Activated T-helper 1 cell treated with anti-CD3 and anti-CD28 coated beads, Interleukin-12 subunit alpha, Interleukin-12 subunit beta, Interleukin-2, Interleukin-4 antibody, amounts not matched to agents 30 ng/mL and 10 ng/mL and 1 ng/mL, durations not matched to agents 14 hours and 24 hours and 36 hours (primary cell): ENCODE measurements at regions of chr19 and their contacts with region 1.

Region 1: DNA sequence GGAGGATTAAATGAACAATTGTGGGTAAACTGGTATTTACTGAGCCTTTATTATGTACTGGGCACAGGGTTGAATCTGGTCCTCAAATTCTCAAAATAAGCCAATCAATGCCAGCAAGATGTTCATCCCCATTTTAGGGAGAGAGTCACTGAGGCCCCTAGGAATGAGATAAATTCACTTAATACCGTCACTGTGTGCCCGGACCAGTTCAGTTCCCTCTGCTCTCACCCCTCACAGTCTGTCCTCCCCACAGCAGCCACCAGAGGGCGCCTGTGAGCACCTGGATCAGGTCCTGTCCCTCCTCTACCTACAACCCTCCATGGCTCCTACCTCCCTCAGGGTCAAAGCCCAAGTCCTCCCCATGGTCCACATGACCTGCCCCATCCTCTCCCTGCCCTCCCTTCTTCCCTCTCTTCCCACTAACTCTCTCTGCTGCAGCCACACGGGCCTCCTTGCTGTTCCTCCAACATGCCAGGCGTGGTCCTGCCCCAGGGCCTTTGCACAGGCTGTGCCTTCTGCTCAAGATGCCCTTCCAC is 42.0 kb upstream of the NFIC start:
- DNase-seq: peak; percentile 52
- H3K4me3 Mint-ChIP-seq: no peak overlapping the region
- H3K27ac Mint-ChIP-seq: no peak overlapping the region
- H3K4me1 Mint-ChIP-seq: no peaks in the 10 kb centered on the region
- H3K27me3 Mint-ChIP-seq: peaks cover 9% of the 10 kb centered on the region

Region 2: GRCh38 chr19:3365836-3366752 is 41.7 kb after region 1 on chr19 and contains the start of gene NFIC:
- intact Hi-C with region 1: no loop called
- DNase-seq: no peak
- H3K4me3 Mint-ChIP-seq: peak within 1 kb of the TSS; percentile 59
- H3K27ac Mint-ChIP-seq: peak within 1 kb of the TSS; percentile 2
- H3K4me1 Mint-ChIP-seq: peaks cover 26% of the 10 kb centered on the region
- H3K27me3 Mint-ChIP-seq: peaks cover 34% of the 10 kb centered on the region
- total RNA-seq, gene NFIC: 16.8 and 18.7 TPM in 2 replicates

Region 3: GRCh38 chr19:3429581-3430080 is 105.2 kb after region 1 on chr19:
- intact Hi-C with region 1: loop called (anchors 1 kb)
- DNase-seq: peak; percentile 65
- H3K4me3 Mint-ChIP-seq: no peak overlapping the region
- H3K27ac Mint-ChIP-seq: no peak overlapping the region
- H3K4me1 Mint-ChIP-seq: no peaks in the 10 kb centered on the region
- H3K27me3 Mint-ChIP-seq: no peaks in the 10 kb centered on the region

Region 4: GRCh38 chr19:3440082-3440481 is 115.7 kb after region 1 on chr19:
- intact Hi-C with region 1: loop called (anchors 1 kb)
- DNase-seq: peak; percentile 32
- H3K4me3 Mint-ChIP-seq: no peak overlapping the region
- H3K27ac Mint-ChIP-seq: no peak overlapping the region
- H3K4me1 Mint-ChIP-seq: peaks cover 6% of the 10 kb centered on the region
- H3K27me3 Mint-ChIP-seq: peaks cover 2% of the 10 kb centered on the region

Region 5: DNA sequence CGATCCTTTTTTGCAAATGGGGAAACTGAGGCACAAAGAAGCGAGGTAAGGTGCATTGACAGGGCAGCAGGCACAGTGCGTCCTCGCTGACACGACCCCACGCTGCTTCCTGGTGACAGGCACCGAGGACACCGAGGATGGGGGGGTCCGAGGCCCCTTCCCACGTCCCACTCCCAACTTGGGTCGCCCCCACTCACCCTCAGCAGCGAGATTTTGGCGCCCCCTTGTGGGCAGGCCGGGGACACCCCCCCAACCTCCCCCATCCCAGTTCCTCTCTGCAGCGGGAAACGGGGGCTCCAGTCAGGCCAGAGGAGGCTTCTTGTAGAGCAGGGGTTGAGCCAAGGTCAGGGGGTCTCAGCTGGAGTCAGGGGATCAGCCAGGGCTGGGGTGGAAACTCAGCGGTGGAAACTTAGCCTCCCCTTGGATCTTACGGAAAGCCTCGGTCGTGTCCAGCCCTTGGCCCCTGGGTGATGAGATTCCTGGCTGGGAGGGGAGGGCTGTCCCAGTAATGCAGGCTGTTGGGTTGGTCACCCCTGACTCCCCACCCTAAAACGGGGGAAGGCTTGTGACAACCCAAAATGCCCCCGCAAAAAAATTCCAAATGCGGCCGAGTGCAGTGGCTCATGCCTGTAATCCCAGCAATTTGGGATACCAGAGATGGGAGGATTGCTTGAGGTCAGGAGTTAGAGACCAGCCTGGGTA is 147.7 kb after region 1 on chr19:
- intact Hi-C with region 1: loop called (anchors 1 kb)
- DNase-seq: no peak
- H3K4me3 Mint-ChIP-seq: no peak overlapping the region
- H3K27ac Mint-ChIP-seq: no peak overlapping the region
- H3K4me1 Mint-ChIP-seq: no peaks in the 10 kb centered on the region
- H3K27me3 Mint-ChIP-seq: no peaks in the 10 kb centered on the region

Region 6: GRCh38 chr19:3700221-3701032 is 376.0 kb after region 1 on chr19 and contains the start of gene PIP5K1C:
- intact Hi-C with region 1: loop called (anchors 10 kb)
- DNase-seq: peak; percentile 90
- H3K4me3 Mint-ChIP-seq: peak within 1 kb of the TSS; percentile 91
- H3K27ac Mint-ChIP-seq: peak within 1 kb of the TSS; percentile 70
- H3K4me1 Mint-ChIP-seq: peaks cover 5% of the 10 kb centered on the region
- H3K27me3 Mint-ChIP-seq: no peaks in the 10 kb centered on the region
- total RNA-seq, gene PIP5K1C: 24.5 and 28.0 TPM in 2 replicates